H1 (cell line): ENCODE measurements at regions of chr14 and their contacts with region 1.

Region 1: GRCh38 chr14:30507209-30507608 is 51.7 kb upstream of the G2E3 start:
- DNase-seq: no peak
- H3K4me3 ChIP-seq: no peak overlapping the region
- H3K27ac ChIP-seq: no peak overlapping the region
- H3K4me1 ChIP-seq: no peaks in the 10 kb centered on the region
- H3K27me3 ChIP-seq: no peaks in the 10 kb centered on the region
- CTCF ChIP-seq: no peak
- EP300 ChIP-seq: no peak
- POLR2A ChIP-seq: no peak
- RAD21 ChIP-seq: no peak

Region 2: DNA sequence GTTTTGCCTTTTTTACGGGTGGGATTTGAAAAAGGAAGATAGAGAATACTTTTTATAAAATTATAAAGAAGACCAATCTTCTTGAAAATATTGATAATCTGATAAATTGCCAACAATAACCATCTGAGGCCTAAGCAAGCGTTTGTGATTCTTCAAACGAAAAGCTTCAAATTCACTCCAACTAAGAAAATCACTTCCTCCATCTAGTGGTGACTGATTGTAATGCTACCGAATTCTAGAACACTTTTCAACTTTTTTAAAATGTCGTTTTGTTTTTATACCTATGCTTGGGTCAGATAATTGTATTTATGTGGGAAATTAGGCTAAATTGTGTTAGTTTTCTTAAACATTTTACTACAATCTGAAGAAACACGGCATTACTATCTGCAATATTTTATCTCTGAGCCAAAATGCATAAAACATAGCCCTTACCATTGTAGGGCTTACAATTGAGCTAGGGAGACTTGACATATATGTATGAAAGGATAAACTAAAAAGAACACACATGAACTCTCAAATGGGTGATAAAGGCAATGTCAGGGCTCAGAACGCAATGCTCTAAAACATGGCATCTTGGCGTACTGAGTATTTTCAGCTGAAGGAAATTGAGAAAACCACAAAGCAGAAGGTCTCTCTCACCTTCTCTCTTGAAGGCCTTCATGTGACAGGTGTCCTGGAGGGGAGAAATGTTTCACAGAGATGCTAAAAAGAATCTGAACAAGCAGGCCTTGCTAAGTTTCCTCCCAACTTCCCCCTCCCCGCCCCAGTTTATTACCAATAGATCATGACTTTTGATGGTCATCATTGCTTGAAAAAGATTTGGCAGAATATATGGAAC is 14.9 kb after region 1 on chr14:
- CTCF ChIA-PET with region 1: interaction called, 13 read pairs
- POLR2A ChIA-PET with region 1: interaction called, 4 read pairs
- DNase-seq: no peak
- H3K4me3 ChIP-seq: no peak overlapping the region
- H3K27ac ChIP-seq: no peak overlapping the region
- H3K4me1 ChIP-seq: no peaks in the 10 kb centered on the region; a peak in 1 of 7 replicates
- H3K27me3 ChIP-seq: no peaks in the 10 kb centered on the region
- CTCF ChIP-seq: peak in 2 of 3 experiments; percentile 43 to 59; a peak in 2 of 4 replicates
- EP300 ChIP-seq: no peak
- POLR2A ChIP-seq: no peak
- RAD21 ChIP-seq: peak; percentile 70